KBM-7 (cell line): ENCODE measurements at regions of chr1 and their contacts with region 1.

Region 1: DNA sequence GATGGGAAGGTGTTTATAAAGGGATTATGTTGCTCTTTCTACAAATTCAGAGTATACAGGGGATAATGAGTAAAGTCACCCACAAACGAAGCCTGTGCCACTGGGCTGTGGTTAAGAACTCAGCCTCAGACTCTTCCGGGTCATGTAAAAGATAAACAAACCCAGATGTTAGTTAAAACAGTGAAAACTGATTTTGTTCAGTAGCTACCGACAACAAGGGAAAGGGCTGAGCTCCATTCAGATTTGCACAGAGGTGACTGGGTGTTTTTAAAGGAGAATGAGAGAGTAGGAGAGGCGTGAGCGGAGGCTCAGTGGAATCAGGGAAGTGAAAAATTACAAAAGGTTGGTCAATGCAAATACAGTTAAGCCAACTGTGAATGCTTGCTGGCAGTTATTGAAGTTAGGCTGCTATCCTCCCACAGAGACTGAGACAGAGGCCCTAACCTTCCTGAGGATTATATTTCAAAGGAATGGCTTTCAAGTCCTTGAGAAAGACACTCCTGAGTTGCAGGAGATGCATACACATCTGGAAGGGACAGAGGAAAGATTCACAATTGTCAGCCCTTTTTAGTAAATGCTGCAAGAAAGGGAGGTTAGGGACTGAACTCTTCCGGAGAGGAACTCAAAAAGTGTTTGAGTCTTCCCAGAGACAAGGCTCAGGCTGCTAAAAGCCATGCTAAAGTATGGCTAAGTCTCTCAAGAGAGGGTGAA is 29.9 kb upstream of the SAMD13 start:
- DNase-seq: peak; percentile 78

Region 2: GRCh38 chr1:83583351-83584014 is 688.1 kb before region 1 on chr1:
- in situ Hi-C with region 1: no loop called
- DNase-seq: no peak

Region 3: GRCh38 chr1:84156210-84156621 is 115.4 kb before region 1 on chr1:
- in situ Hi-C with region 1: loop called (anchors 25 kb)
- DNase-seq: peak; percentile 26